Mammary epithelial cell (primary cell): ENCODE measurements at regions of chr5 and their contacts with region 1.

Region 1: DNA sequence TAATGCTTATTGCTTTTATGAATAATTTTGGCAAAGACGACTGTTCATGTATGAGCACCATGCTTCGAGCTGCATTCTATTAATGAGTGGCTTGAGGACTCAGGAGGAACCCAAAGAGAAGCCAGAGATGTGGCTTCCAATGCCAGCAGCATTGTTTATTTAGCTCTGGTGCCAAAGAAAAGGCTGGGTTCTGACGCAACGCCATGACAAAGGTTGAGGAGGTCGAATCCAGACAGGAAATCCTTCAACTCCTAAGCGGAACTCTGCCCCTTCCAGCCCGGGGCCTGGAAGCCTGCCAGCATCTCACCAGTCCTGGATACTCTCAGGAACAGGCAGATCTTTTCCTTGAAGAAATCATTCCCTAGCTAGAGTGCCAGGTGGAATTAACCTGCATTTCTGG is 104.4 kb downstream of the ARHGAP26 start:
- DNase-seq: peak; percentile 72
- H3K4me3 ChIP-seq: no peak overlapping the region
- H3K27ac ChIP-seq: peak overlapping the region; percentile 0
- H3K4me1 ChIP-seq: peaks cover 46% of the 10 kb centered on the region
- H3K27me3 ChIP-seq: no peaks in the 10 kb centered on the region
- CTCF ChIP-seq: no peak

Region 2: DNA sequence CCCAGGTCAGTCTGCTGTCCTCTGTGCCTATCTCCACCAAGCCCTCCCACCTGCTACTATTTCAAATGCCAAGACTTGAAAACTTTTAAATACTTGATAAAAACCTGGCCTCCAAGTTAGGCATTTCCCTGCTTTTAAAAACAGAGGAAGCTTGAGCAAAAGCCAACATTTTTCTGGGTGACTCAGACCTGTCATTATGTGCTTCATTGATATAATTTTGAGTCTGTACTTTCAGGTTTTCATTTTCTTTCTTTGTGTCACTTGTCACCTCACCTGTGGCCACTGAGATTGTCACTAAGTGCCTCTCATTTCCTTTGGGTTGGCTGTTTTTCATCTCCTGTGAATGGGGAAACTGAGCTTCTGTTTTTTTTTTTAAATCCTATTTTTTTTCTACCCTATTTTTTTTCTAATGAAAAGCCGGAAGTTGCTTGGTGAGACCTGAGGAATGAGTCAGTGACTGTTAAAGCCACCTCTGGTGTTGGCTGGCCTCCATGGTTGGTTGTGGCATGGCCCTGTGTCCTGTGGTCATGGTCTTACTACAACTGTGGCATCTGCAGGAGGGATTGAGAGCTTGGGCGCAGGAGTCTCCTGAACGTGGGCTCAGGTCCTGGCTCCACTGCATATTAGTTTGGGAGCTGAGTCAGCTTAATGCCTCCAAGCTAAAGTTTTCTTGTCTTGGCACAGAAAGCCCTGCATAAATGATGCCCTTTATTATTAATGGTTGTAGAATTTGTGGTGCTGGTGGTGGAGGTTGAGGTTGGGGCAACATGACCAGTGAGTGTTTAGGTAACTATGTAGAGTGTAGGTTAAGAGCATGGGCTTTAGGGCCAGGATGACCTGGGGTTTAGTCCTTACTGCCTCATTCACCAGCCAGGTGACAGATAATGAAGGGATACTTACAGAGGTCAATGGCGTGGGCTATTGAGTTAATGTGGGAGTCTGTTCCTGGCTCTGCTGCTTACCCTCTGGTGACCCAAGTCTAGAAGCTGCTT is 47.5 kb before region 1 on chr5:
- CTCF ChIA-PET with region 1: no interaction called
- dilution Hi-C with region 1: no loop called
- in situ Hi-C with region 1: no loop called
- intact Hi-C with region 1: loop called (anchors 5 kb)
- DNase-seq: peak; percentile 82
- H3K4me3 ChIP-seq: no peak overlapping the region
- H3K27ac ChIP-seq: peak overlapping the region; percentile 15
- H3K4me1 ChIP-seq: peaks cover 54% of the 10 kb centered on the region
- H3K27me3 ChIP-seq: no peaks in the 10 kb centered on the region
- CTCF ChIP-seq: no peak